ENCODE measurements at regions of chr10 and their contacts with region 1.

Region 1: DNA sequence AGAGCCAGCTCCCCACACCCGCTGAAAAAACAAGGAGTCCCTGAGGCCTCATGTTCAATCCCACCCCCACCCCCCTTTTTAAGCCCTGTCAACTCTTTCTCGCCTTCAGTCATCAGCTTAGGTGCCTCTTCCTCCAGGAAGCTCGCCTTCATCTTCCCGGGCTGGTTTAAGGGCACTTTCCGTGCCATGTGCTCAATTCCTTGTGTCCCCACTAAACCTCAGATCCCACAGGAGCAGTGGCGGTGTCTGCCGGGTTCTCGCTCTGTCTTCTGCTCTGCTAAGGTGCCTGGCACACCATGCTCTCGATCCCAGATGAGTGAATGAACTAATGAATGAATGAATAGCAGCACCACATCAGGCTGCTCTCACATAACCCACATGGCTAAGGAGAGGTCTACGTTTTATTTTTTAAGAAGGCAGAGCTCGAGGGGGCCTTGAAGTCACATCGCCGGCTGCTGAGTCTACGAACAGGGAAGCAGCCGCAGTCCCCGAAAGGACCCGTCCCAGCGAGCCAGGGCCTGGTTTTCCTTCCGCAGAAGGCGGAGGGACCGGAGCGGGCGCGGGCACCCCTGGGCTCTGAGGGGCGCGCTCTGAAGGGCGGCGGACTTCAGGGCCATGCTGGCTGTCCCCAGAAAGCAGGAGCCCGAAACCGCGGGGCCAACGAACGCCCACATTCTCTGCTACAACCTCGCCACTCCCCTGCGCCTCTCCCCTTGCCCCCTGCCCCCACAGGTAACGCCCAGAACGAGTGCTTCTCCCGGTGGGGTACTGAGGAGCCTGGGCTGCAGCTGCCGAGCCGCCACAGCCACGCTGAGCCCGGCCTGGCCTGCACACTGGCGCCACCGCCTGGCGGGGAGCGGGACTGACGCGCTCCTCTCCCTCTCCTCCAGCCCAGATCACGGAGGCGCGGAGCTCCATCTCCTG is 73.4 kb upstream of the KCNMA1 start:
- DNase-seq: peak; percentile 43
- H3K4me3 ChIP-seq: peak overlapping the region in 2 of 3 experiments; percentile 4 to 42
- H3K27ac ChIP-seq: no peak overlapping the region
- H3K4me1 ChIP-seq: peaks cover 8% of the 10 kb centered on the region
- H3K27me3 ChIP-seq: no peaks in the 10 kb centered on the region
- CTCF ChIP-seq: peak; percentile 92 to 99

Region 2: GRCh38 chr10:77251297-77252013 is 459.6 kb before region 1 on chr10:
- CTCF ChIA-PET with region 1: no interaction called
- dilution Hi-C with region 1: no loop called
- in situ Hi-C with region 1: no loop called
- intact Hi-C with region 1: loop called (anchors 5 kb)
- DNase-seq: peak; percentile 29
- H3K4me3 ChIP-seq: no peak overlapping the region
- H3K27ac ChIP-seq: no peak overlapping the region
- H3K4me1 ChIP-seq: peaks cover 10% of the 10 kb centered on the region
- H3K27me3 ChIP-seq: no peaks in the 10 kb centered on the region
- CTCF ChIP-seq: peak; percentile 67 to 77

Region 3: DNA sequence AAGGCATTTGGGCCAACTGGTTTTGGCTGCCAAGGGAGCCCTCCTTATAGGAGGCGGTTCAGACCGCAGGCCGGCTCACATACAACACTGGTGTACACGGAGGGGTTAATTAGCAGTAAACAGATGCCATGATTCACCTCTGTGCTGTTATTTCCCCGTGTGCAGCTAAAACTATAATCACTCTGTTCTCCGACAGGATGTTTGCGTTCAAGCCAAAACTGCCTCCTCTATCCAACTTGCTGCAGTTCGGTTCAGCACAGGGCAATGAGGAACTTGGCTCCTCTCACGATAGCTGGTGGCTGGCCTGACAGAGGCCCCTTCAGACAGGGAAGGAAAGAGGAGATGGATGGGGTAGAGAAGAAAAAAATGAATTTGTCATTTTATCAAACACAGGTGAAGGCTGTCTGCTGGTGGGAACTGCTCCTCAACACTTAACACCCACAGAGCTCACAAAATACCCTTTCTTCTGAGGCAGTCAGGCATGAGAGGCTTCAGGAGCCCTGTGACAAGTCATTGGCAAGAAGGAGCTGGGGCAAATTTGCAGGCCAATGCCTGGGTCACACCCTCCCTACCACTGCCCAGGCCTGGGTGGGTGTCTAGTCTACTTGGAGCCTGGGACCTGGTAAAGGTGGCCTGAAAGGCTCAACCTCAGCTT is 97.4 kb before region 1 on chr10:
- CTCF ChIA-PET with region 1: no interaction called
- dilution Hi-C with region 1: no loop called
- in situ Hi-C with region 1: no loop called
- intact Hi-C with region 1: no loop called
- DNase-seq: no peak
- H3K4me3 ChIP-seq: no peak overlapping the region
- H3K27ac ChIP-seq: no peak overlapping the region
- H3K4me1 ChIP-seq: peaks cover 8% of the 10 kb centered on the region
- H3K27me3 ChIP-seq: no peaks in the 10 kb centered on the region
- CTCF ChIP-seq: no peak

Region 4: DNA sequence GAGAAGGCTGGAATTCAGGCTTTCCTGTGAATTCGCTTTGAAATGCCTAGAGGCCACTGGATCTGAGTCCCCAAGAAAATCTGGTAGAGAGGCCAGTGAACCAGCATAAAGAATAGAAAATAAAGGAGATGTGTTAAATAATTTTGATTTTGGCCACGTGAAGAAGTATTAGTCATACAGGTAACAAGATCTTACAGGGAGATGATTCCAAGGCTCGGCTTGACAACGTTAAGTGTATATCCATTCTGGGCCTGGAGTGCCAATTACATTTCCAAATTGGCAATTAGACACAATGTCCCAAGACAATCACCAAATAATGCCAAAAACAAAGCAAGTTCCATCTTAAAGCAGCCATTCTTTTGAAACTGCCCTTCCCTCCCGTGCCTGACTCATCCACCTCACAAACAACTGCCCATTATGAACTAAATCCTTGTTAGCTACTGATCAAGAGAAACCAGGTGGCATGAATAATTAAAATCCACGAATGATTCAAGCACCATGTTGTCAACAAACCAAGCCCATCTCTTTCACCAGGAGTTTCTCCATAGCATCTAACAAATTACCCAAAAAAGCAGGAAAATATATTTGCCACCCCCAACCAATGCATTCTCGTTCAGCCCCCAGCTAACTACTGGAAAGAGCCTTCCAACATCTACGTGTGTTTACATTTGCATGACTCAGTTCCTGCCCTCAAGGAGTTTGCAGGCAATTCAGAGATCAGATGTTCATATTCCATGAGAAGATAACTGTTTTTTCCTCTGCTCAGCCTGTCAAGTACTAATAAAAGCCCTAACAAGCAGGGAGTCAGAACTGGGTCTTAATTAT is 81.9 kb before region 1 on chr10:
- CTCF ChIA-PET with region 1: no interaction called
- dilution Hi-C with region 1: no loop called
- in situ Hi-C with region 1: no loop called
- intact Hi-C with region 1: no loop called
- DNase-seq: peak; percentile 81
- H3K4me3 ChIP-seq: no peak overlapping the region
- H3K27ac ChIP-seq: peak overlapping the region; percentile 80
- H3K4me1 ChIP-seq: peaks cover 32% of the 10 kb centered on the region
- H3K27me3 ChIP-seq: no peaks in the 10 kb centered on the region
- CTCF ChIP-seq: no peak

Region 5: DNA sequence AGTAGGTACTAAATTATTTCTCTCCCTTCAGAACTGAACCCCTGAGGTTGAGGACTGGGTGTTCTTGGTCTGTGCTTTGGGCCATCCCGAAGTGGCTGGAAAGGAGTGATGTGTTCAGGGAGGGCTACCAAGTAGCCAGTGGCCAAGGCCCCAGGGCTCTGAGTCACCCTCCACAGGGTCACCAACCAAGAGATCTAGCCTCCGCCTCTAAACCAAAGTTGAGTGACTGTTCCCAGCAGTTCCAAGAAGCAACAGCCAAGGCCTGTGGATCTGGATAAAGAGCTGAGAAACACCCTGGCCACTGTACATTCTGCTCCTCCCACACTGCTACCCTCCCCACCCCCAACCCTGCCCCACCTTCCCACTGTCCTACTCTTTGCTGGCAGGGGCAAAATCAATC is 37.9 kb before region 1 on chr10:
- CTCF ChIA-PET with region 1: no interaction called
- dilution Hi-C with region 1: loop called (anchors 5 kb)
- in situ Hi-C with region 1: no loop called
- intact Hi-C with region 1: no loop called
- DNase-seq: peak; percentile 29
- H3K4me3 ChIP-seq: no peak overlapping the region
- H3K27ac ChIP-seq: no peak overlapping the region
- H3K4me1 ChIP-seq: no peaks in the 10 kb centered on the region
- H3K27me3 ChIP-seq: no peaks in the 10 kb centered on the region
- CTCF ChIP-seq: no peak

Region 6: DNA sequence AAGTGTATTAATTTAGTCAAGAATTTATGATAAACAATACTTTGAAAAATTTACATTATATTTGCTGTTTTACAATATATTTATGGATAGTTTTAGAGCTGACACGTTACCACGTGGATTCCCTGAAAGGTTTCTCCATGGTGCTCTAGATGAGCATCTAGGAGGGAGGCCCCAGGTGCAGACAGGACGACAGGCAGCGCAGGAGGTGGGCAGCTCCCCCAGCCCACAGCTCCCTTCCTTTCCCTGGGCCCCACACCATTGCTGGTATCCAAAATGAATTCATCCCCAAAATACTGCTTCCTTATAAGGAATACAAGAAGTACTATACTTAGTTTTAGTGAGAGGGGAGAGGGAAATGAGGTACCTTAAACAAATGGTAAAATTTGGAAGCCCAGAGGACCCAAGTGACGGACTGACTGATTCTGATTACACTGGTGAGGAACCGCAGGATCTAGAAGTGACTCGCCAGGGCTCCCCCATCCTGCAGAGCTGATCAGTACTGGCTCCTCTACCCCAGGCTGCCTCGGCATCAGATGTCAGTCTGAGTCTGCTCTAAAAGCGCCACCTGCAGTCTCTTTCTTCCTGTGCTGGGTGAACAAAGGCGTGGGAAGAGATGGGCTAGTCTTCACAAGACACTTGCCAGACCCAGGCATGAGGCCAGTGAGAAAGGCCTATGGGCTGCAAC is 126.4 kb after region 1 on chr10:
- CTCF ChIA-PET with region 1: interaction called, 3 read pairs
- dilution Hi-C with region 1: no loop called
- in situ Hi-C with region 1: no loop called
- intact Hi-C with region 1: loop called (anchors 1 kb)
- DNase-seq: peak; percentile 62
- H3K4me3 ChIP-seq: no peak overlapping the region
- H3K27ac ChIP-seq: no peak overlapping the region
- H3K4me1 ChIP-seq: peaks cover 10% of the 10 kb centered on the region
- H3K27me3 ChIP-seq: no peaks in the 10 kb centered on the region
- CTCF ChIP-seq: peak; percentile 30 to 45